ENCODE measurements at regions of chr7 and their contacts with region 1.

Region 1: GRCh38 chr7:118214051-118214832 is 10.3 kb upstream of the ANKRD7 start:
- DNase-seq: peak; percentile 87
- ATAC-seq: peak; percentile 91
- H3K4me3 ChIP-seq: peak overlapping the region in 4 of 5 experiments; percentile 41 to 75 (median 56)
- H3K4me3 Mint-ChIP-seq: peak overlapping the region; percentile 92
- H3K27ac ChIP-seq: peak overlapping the region in 1 of 2 donors; percentile 20
- H3K27ac Mint-ChIP-seq: peak overlapping the region; percentile 89
- H3K4me1 ChIP-seq: peaks cover 5 to 12% of the 10 kb centered on the region in 2 donors
- H3K4me1 Mint-ChIP-seq: peaks cover 16% of the 10 kb centered on the region
- H3K27me3 ChIP-seq: peaks cover 0 to 3% (median 0%) of the 10 kb centered on the region in 4 experiments
- H3K27me3 Mint-ChIP-seq: peaks cover 25% of the 10 kb centered on the region
- CTCF ChIP-seq: no peak

Region 2: DNA sequence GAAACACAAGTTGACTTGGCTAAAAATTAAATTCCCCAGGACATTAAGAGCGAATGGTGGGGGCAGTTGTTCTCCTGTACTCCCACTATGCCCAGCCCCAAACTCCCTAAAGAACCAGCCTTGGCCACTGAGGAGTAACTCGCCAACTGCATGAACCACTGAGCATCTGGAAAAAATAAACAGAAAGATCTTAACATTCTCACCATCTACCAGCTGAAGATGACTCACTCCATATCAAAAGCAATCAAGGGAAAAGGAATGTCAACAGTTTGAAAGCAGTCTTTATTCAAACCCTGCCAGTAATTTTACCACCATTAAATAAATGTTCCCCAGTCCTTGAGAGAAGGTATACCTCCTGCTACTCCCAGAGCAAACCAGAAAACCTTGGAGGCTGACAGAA is 386.4 kb before region 1 on chr7:
- CTCF ChIA-PET with region 1: no interaction called
- POLR2A ChIA-PET with region 1: no interaction called
- intact Hi-C with region 1: no loop called
- DNase-seq: no peak
- ATAC-seq: no peak
- H3K4me3 ChIP-seq: no peak overlapping the region
- H3K4me3 Mint-ChIP-seq: no peak overlapping the region
- H3K27ac ChIP-seq: no peak overlapping the region
- H3K27ac Mint-ChIP-seq: no peak overlapping the region
- H3K4me1 ChIP-seq: no peaks in the 10 kb centered on the region
- H3K4me1 Mint-ChIP-seq: no peaks in the 10 kb centered on the region
- H3K27me3 ChIP-seq: no peaks in the 10 kb centered on the region
- H3K27me3 Mint-ChIP-seq: no peaks in the 10 kb centered on the region
- CTCF ChIP-seq: no peak

Region 3: GRCh38 chr7:118183786-118184564 is 30.3 kb before region 1 on chr7 and contains the start of gene LSM8:
- CTCF ChIA-PET with region 1: no interaction called
- POLR2A ChIA-PET with region 1: no interaction called
- intact Hi-C with region 1: loop called (anchors 1 kb)
- DNase-seq: peak; percentile 99
- ATAC-seq: peak; percentile 97
- H3K4me3 ChIP-seq: peak within 1 kb of the TSS; percentile 84 to 99 (median 88)
- H3K4me3 Mint-ChIP-seq: peak within 1 kb of the TSS; percentile 94
- H3K27ac ChIP-seq: peak within 1 kb of the TSS; percentile 96 to 98
- H3K27ac Mint-ChIP-seq: peak within 1 kb of the TSS; percentile 98
- H3K4me1 ChIP-seq: peaks cover 25 to 29% of the 10 kb centered on the region in 2 donors
- H3K4me1 Mint-ChIP-seq: peaks cover 50% of the 10 kb centered on the region
- H3K27me3 ChIP-seq: no peaks in the 10 kb centered on the region
- H3K27me3 Mint-ChIP-seq: no peaks in the 10 kb centered on the region
- CTCF ChIP-seq: no peak
- total RNA-seq, gene LSM8: 64.3 TPM in 2 replicates